Heart right ventricle (tissue), 16 donors: ENCODE measurements at regions of chr15 and their contacts with region 1.

Region 1: GRCh38 chr15:50116473-50116872 is 2.6 kb downstream of the ATP8B4 start:
- DNase-seq: no peak
- ATAC-seq: no peak
- H3K4me3 ChIP-seq: no peak overlapping the region
- H3K27ac ChIP-seq: no peak overlapping the region
- H3K4me1 ChIP-seq: peaks cover 0 to 30% (median 0%) of the 10 kb centered on the region in 9 donors
- H3K27me3 ChIP-seq: peaks cover 0 to 13% (median 0%) of the 10 kb centered on the region in 7 donors
- CTCF ChIP-seq: peak in 1 of 9 donors; percentile 48

Region 2: DNA sequence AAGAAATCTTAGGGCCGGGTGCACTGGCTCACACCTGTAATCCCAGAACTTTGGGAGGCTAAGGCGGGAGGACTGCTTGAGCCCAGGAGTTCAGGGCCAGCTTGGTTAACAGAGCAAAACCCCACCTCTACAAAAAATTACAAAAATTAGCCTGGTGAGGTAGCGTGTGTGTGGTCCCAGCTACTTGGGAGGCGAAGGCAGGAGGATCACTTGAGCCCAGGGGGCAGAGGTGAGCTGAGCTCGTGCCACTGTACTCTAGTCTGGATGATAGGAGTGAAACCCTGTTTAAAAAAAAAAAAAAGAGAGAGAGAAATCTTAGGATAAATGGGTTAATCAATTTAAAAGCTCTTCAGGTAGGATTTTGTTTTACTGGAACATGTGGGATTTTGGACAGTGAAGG is 1816.4 kb before region 1 on chr15:
- intact Hi-C with region 1: loop called in 1 of 10 experiments (anchors 10 kb)
- DNase-seq: no peak
- ATAC-seq: no peak
- H3K4me3 ChIP-seq: no peak overlapping the region
- H3K27ac ChIP-seq: no peak overlapping the region
- H3K4me1 ChIP-seq: no peaks in the 10 kb centered on the region
- H3K27me3 ChIP-seq: peaks cover 0 to 4% (median 0%) of the 10 kb centered on the region in 7 donors
- CTCF ChIP-seq: no peak